Left ventricle myocardium superior (tissue), 1 donor: ENCODE measurements at regions of chr4 and their contacts with region 1.

Region 1: DNA sequence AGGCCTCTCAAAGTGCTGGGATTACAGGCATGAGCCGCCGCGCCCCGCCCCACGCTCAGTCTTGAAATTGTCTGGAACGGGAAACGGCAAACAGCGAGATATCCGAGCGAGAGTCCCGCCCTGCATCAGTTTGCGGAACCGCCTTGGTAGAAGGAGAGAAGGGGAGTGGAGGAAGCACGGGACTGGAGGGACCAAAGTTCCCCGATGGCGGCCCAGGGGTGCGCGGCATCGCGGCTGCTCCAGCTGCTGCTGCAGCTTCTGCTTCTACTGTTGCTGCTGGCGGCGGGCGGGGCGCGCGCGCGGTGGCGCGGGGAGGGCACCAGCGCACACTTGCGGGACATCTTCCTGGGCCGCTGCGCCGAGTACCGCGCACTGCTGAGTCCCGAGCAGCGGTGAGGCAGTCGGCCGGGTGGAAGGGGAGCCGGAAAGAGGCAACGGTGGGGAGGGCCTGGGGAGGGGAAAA is at the start of gene BST1:
- DNase-seq: peak; percentile 82
- ATAC-seq: peak; percentile 87
- total RNA-seq, gene BST1: 3.6 TPM

Region 2: DNA sequence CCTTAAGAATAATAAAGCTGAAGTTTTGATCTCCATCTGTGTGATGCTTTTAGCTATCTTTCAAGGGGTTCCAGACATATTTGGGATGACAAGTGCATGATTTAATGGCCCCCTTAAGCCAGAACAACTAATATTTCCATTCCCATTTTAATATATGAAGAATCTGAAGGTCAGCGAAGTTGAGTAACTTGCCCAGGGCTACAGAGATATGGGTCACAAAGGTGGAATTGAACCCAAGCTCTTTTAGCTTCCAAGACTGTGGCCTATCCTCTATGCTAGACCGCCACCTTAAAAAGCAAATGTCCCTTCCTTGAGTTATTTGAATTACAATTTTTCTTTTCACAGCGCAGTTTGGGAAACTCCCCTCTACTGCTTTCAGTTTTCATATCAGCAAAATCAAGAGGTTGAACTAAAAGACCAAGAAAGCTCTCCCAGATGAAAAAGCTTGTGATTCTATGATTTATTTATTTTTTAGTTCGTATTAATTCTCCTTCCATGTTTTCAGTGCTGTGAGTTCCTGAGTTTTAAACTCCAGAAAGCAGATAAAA is 449.7 kb before region 1 on chr4:
- intact Hi-C with region 1: no loop called
- DNase-seq: no peak
- ATAC-seq: no peak

Region 3: DNA sequence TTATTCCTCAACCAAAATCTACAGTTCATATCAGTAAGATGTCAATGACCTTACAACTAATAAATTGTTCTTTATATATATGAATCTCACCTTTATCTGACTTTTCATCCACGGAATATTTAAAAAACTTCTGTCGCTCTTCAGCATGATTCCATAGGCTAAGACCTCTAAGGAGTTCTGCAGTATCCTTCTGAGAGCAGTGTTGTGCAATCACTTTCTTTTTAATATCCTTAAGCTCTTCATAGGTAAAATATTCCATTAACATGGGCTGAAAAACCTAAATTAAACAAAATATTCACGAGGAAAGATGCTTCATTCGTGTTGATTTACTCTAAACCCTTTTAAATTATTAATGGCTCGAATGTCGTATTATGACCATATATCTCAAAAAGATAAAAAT is 64.6 kb before region 1 on chr4:
- intact Hi-C with region 1: no loop called
- DNase-seq: no peak
- ATAC-seq: no peak

Region 4: GRCh38 chr4:15677507-15677988 is 25.4 kb before region 1 on chr4:
- intact Hi-C with region 1: no loop called
- DNase-seq: no peak
- ATAC-seq: no peak

Region 5: GRCh38 chr4:17576932-17577665 is 1874.1 kb after region 1 on chr4 and contains the start of gene LAP3:
- intact Hi-C with region 1: loop called (anchors 10 kb)
- DNase-seq: peak; percentile 99
- ATAC-seq: peak; percentile 99
- total RNA-seq, gene LAP3: 55.6 TPM